Dendritic cell treated with granulocyte-macrophage colony-stimulating factor and Interleukin-4, amounts not matched to agents 40 ng/mL and 50 ng/mL, for 4 days (primary cell): ENCODE measurements at regions of chr3 and their contacts with region 1.

Region 1: DNA sequence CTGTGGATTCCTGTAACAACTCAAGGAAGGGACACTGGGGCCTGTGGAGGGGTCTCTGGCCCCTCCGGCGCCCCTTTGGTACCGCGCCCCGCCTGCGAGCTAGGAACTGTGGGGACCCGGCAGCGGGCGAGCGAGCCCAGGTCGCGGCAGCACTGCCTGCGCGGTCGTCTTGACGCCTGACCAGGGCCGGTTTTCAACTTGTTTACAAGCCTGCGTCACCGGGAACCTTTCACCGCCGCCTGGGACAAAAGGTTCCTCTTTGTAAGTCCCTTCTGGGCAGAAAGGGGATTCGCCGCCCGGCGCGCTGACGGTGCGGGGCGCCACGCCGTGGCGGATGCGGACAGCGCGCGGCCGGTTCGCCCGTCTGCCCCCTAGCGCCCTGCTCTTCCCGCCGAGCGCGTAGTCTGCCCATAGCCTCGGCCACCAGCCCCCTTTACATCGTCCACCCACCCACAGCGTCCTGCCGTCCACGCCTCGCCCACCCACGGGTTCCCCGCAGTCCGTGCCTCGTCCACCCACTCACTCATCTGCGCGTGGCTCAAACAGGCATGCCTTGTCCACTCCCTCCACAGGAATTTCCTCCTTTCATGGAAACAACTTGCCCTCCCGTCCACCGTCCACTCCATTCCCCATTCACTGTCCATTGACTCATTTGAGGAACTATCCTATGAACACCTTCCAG is 5.5 kb upstream of the CFAP100 start:
- H3K4me3 Mint-ChIP-seq: peak overlapping the region; percentile 51
- H3K27ac Mint-ChIP-seq: peak overlapping the region; percentile 76
- H3K4me1 Mint-ChIP-seq: peaks cover 13% of the 10 kb centered on the region
- H3K27me3 Mint-ChIP-seq: peaks cover 67% of the 10 kb centered on the region

Region 2: GRCh38 chr3:125916376-125916978 is 472.8 kb before region 1 on chr3:
- intact Hi-C with region 1: loop called (anchors 10 kb)
- H3K4me3 Mint-ChIP-seq: peak overlapping the region; percentile 84
- H3K27ac Mint-ChIP-seq: peak overlapping the region; percentile 91
- H3K4me1 Mint-ChIP-seq: peaks cover 12% of the 10 kb centered on the region
- H3K27me3 Mint-ChIP-seq: peaks cover 4% of the 10 kb centered on the region

Region 3: DNA sequence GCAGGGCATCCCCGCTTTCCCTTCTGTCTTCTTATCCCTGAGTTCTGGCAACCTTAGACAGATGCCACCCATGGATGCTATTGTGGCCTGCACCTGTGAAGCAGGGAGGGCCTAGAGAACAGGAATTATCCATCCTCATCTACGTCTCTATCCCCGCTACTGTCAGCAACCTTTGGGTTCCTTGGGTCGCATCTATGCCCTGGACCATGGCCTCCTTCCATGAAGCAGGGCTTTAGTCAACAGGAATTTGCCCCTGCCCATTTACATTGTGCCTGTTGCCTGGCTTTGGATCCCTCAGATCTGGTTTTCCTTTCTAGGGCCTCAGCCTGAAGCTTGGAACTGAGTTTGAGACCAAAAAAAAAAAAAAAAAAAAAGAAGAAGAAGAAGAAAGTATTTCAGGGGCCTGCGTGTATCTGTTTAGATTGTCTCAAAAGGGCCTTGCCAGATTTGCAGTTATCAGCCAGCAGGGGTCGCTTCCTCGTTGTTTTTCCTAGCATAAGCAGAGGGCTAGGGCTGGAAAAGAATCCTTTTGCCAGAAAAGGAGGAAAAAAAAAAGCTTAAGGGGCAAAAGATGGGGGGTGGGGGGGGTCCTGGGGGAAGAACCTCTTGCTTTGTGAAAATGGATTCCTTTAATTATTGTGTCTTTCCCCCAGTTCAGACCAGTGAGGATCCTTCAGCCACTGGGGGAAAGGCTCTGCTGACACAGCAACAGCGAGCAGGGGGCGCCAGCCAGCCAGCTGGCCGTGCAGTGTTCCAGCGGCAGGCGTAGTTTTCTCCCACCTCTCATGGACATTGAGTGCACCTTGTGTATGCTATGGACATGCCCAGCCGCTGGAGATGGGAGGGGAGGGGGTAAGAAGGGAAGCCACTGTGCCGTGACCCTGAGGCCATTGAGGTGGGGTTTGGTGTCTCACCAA is 143.2 kb before region 1 on chr3:
- intact Hi-C with region 1: loop called (anchors 1 kb)
- H3K4me3 Mint-ChIP-seq: no peak overlapping the region
- H3K27ac Mint-ChIP-seq: no peak overlapping the region
- H3K4me1 Mint-ChIP-seq: no peaks in the 10 kb centered on the region
- H3K27me3 Mint-ChIP-seq: peaks cover 21% of the 10 kb centered on the region